H1 (cell line): ENCODE measurements at regions of chr6 and their contacts with region 1.

Region 1: DNA sequence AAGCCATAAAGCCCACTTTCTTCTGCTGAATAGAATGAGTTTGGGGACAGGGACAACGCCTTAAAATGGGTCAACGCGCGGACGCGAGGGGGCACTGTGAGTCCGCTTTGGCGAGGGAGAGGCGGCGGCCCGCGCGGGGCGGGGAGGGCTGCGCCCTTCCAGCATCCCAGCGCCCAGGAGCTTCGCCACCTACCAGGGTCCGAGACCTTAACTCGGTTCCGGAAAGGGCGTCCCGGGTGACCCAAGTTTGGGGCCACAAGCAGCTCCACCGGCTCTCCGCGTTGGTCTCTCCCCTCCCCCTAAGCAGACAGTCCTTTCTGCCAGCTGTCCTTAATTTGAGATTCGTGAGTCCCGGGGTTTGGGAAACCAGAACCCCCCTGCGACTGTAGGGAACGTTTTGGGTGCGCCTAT is 1.8 kb upstream of the SAMD5 start:
- DNase-seq: peak in 1 of 2 experiments; percentile 88
- H3K4me3 ChIP-seq: peak overlapping the region in 3 of 4 experiments; percentile 33 to 71 (median 64); a peak in 5 of 8 replicates
- H3K27ac ChIP-seq: no peak overlapping the region
- H3K4me1 ChIP-seq: peaks cover 0 to 9% (median 6%) of the 10 kb centered on the region in 4 experiments; a peak in 4 of 7 replicates
- H3K27me3 ChIP-seq: peaks cover 68 to 94% (median 84%) of the 10 kb centered on the region in 4 experiments
- CTCF ChIP-seq: peak; percentile 67 to 85 (median 78)
- EP300 ChIP-seq: no peak
- POLR2A ChIP-seq: no peak
- RAD21 ChIP-seq: peak; percentile 93 to 95

Region 2: GRCh38 chr6:146153040-146153758 is 1353.5 kb before region 1 on chr6:
- CTCF ChIA-PET with region 1: no interaction called
- POLR2A ChIA-PET with region 1: no interaction called
- DNase-seq: no peak
- H3K4me3 ChIP-seq: no peak overlapping the region
- H3K27ac ChIP-seq: no peak overlapping the region
- H3K4me1 ChIP-seq: peaks cover 0 to 3% (median 0%) of the 10 kb centered on the region in 4 experiments; a peak in 2 of 7 replicates
- H3K27me3 ChIP-seq: no peaks in the 10 kb centered on the region
- CTCF ChIP-seq: no peak
- EP300 ChIP-seq: no peak
- POLR2A ChIP-seq: no peak
- RAD21 ChIP-seq: no peak

Region 3: DNA sequence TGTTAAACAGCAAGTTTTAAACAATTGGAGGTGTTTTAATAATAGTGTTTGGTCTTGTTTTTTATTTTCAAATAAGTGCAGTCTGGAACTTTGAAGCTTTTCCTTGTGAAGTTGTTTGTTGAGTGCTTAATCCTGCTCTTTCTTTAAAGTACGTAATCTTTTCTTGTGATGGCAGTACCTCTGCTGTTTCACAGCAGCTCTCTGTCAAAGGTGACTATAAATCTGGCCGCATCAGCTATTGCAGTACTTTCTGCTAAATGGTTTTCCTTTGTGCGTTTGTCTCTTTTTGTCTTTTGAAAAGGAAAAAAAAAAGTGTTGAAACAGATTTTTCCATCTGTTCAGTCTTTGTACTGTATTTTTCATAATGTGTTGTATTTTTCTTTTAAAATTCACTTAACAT is 289.8 kb before region 1 on chr6:
- CTCF ChIA-PET with region 1: no interaction called
- POLR2A ChIA-PET with region 1: no interaction called
- DNase-seq: no peak
- H3K4me3 ChIP-seq: no peak overlapping the region
- H3K27ac ChIP-seq: no peak overlapping the region
- H3K4me1 ChIP-seq: 0 out of 7 replicates have a peak, but pooled peaks cover 0 to under 1% (median 0%) of the 10 kb centered on the region in 4 experiments
- H3K27me3 ChIP-seq: no peaks in the 10 kb centered on the region
- CTCF ChIP-seq: no peak
- EP300 ChIP-seq: no peak
- POLR2A ChIP-seq: no peak
- RAD21 ChIP-seq: no peak

Region 4: DNA sequence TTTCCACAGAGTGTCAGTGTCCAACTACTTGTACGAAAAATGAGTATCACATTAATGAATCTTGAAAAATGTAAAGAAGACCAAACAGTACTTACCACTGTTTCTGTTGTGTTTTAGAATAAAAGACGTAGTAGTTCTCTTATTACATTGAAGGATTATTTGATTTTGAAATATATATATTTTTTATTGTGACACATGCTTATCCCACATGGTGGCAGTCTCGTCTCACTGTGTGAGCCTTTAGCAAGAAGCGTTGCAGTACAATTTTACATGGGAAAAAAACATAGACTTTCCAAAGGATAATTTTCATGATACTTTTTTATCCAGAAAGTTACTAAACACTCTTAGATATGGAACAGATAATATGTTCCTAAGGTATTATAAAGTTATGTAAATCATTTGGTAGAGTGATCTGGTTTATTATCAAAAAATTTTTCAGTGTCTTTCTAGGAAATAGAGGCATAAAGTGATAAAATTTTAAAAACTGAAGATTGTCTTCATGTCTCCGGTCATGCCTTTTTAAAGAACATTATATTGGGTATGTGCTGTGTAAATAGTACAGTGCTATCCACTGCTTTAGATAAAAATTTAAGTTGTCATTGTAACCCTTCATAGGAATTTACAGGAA is 115.7 kb before region 1 on chr6:
- CTCF ChIA-PET with region 1: interaction called, 12 read pairs
- POLR2A ChIA-PET with region 1: no interaction called
- DNase-seq: no peak
- H3K4me3 ChIP-seq: no peak overlapping the region
- H3K27ac ChIP-seq: no peak overlapping the region
- H3K4me1 ChIP-seq: no peaks in the 10 kb centered on the region
- H3K27me3 ChIP-seq: no peaks in the 10 kb centered on the region
- CTCF ChIP-seq: peak in 2 of 3 experiments; percentile 29 to 65; a peak in 3 of 4 replicates
- EP300 ChIP-seq: no peak
- POLR2A ChIP-seq: no peak
- RAD21 ChIP-seq: peak; percentile 88 to 93

Region 5: GRCh38 chr6:147397306-147397705 is 109.4 kb before region 1 on chr6:
- CTCF ChIA-PET with region 1: interaction called, 12 read pairs
- POLR2A ChIA-PET with region 1: no interaction called
- DNase-seq: no peak
- H3K4me3 ChIP-seq: no peak overlapping the region
- H3K27ac ChIP-seq: no peak overlapping the region
- H3K4me1 ChIP-seq: no peaks in the 10 kb centered on the region
- H3K27me3 ChIP-seq: no peaks in the 10 kb centered on the region
- CTCF ChIP-seq: no peak
- EP300 ChIP-seq: no peak
- POLR2A ChIP-seq: no peak
- RAD21 ChIP-seq: no peak

Region 6: GRCh38 chr6:147486683-147487082 is 20.0 kb before region 1 on chr6:
- CTCF ChIA-PET with region 1: no interaction called
- POLR2A ChIA-PET with region 1: no interaction called
- DNase-seq: no peak
- H3K4me3 ChIP-seq: no peak overlapping the region
- H3K27ac ChIP-seq: no peak overlapping the region
- H3K4me1 ChIP-seq: no peaks in the 10 kb centered on the region
- H3K27me3 ChIP-seq: no peaks in the 10 kb centered on the region
- CTCF ChIP-seq: no peak
- EP300 ChIP-seq: no peak
- POLR2A ChIP-seq: no peak
- RAD21 ChIP-seq: no peak

Region 7: GRCh38 chr6:147970975-147971374 is 464.3 kb after region 1 on chr6:
- CTCF ChIA-PET with region 1: interaction called, 11 read pairs
- POLR2A ChIA-PET with region 1: no interaction called
- DNase-seq: no peak
- H3K4me3 ChIP-seq: no peak overlapping the region
- H3K27ac ChIP-seq: no peak overlapping the region
- H3K4me1 ChIP-seq: no peaks in the 10 kb centered on the region
- H3K27me3 ChIP-seq: peaks cover 0 to 1% (median 0%) of the 10 kb centered on the region in 4 experiments; a peak in 1 of 7 replicates
- CTCF ChIP-seq: peak in 2 of 3 experiments; percentile 22 to 42; a peak in 2 of 4 replicates
- EP300 ChIP-seq: no peak
- POLR2A ChIP-seq: no peak
- RAD21 ChIP-seq: peak; percentile 67 to 68

Region 8: DNA sequence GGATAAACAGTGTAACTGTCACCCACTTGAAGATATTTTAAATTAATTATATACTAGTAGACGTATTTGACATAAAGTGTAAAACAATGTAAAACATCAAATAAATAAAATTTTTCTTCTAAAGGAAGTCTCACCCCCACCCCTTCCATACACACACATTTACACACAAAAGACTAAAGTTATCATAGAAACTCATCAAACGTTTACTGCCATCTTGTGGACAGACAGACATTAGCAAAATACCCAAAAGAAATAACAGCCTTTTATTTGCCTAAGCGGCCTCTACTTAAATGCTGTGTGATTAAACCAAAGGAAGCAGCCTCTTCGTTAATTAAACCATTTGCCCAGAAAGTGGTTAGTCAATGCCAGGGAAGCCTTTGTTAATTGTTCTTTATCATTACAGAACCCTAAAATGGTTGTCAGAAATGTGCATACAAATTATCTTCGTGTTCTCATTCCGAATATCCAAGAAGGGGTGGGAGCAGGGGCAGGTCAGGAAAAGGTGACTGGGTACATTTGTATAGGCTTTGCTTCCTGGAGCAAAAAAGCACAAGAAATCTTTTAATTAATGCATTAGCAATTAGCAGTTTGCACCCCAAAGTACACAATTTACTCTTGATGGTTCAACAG is 659.7 kb after region 1 on chr6:
- CTCF ChIA-PET with region 1: interaction called, 14 read pairs
- POLR2A ChIA-PET with region 1: no interaction called
- DNase-seq: no peak
- H3K4me3 ChIP-seq: no peak overlapping the region
- H3K27ac ChIP-seq: no peak overlapping the region
- H3K4me1 ChIP-seq: no peaks in the 10 kb centered on the region; a peak in 1 of 7 replicates
- H3K27me3 ChIP-seq: no peaks in the 10 kb centered on the region
- CTCF ChIP-seq: peak in 2 of 3 experiments; percentile 40 to 56; a peak in 2 of 4 replicates
- EP300 ChIP-seq: no peak
- POLR2A ChIP-seq: no peak
- RAD21 ChIP-seq: peak; percentile 78 to 81